ENCODE measurements at regions of chr17 and their contacts with region 1.

Region 1: DNA sequence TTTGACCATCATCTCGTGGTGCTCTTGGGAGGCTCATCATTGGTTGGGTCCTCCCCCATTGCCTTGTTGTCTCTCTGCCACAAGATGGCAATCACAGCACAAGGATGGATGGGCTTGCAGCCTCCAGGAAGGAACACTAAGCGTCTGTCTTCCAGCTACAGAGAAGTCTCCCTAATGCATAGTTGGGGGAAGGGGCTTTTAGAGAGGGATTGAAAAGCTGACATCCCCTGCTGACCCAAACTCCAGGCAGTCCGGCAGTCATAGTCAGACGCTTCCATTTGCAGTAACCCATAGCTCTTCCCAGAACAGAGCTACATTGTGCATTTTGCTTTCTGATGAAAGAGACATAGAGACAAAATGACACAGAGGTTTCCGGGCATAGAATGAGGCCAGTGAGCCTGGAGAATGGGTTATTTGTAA is 111.4 kb downstream of the UTP18 start:
- DNase-seq: peak; percentile 51
- ATAC-seq: peak; percentile 49
- H3K4me3 Mint-ChIP-seq: no peak overlapping the region
- H3K27ac Mint-ChIP-seq: no peak overlapping the region
- H3K4me1 Mint-ChIP-seq: peaks cover 11% of the 10 kb centered on the region
- H3K27me3 Mint-ChIP-seq: peaks cover 9% of the 10 kb centered on the region

Region 2: DNA sequence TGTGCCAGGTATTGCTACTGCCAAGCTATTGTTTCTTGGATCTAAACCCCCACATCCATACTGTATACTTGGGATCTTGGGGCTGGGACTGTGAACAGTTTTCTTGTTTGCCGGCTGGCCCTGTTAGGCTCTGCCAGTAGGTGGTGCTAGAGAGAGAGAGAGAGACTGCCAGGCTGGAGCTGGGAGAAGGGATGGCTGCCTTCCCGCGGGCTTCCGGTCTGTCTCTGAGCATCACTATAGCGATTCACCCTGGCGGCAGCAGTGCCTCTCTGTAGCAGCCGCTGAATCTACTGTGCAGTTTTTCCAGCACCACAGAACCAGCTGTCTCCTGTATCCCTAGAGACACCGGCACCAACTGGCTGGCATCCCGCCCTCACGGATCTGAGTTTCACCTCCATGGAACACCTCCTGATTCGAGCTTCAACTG is 89.8 kb after region 1 on chr17:
- CTCF ChIA-PET with region 1: interaction called, 28 read pairs
- POLR2A ChIA-PET with region 1: no interaction called
- DNase-seq: peak; percentile 69
- ATAC-seq: peak; percentile 79
- H3K4me3 Mint-ChIP-seq: no peak overlapping the region
- H3K27ac Mint-ChIP-seq: no peak overlapping the region
- H3K4me1 Mint-ChIP-seq: no peaks in the 10 kb centered on the region
- H3K27me3 Mint-ChIP-seq: peaks cover 3% of the 10 kb centered on the region

Region 3: DNA sequence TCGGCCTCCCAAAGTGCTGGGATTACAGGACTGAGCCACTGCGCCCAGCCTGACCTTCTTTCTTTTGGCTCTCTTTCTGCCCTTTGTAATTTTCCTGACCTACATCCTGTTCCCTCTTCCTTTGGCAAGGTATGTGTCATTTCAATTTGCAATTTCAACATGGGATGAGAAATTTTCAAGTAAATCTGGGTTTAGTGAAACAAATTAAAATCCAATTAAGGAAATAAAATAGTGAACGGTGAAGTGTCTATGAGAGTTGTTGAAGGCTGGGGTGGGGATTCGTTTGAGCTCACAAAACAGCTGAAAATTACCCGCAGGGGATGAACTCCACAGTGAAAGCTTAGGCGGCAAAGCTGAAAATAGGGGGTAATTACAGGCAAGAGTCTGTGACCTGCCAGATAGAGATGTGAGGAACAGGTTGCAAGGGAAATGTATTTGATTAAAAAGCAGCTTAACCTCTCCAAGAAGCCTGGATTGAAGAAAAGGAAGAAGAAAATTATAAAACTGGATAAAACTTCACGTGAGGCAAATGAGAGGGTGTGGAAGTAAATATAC is 166.3 kb after region 1 on chr17:
- CTCF ChIA-PET with region 1: interaction called, 109 read pairs
- POLR2A ChIA-PET with region 1: no interaction called
- DNase-seq: no peak
- ATAC-seq: no peak
- H3K4me3 Mint-ChIP-seq: no peak overlapping the region
- H3K27ac Mint-ChIP-seq: no peak overlapping the region
- H3K4me1 Mint-ChIP-seq: peaks cover 9% of the 10 kb centered on the region
- H3K27me3 Mint-ChIP-seq: peaks cover 2% of the 10 kb centered on the region

Region 4: DNA sequence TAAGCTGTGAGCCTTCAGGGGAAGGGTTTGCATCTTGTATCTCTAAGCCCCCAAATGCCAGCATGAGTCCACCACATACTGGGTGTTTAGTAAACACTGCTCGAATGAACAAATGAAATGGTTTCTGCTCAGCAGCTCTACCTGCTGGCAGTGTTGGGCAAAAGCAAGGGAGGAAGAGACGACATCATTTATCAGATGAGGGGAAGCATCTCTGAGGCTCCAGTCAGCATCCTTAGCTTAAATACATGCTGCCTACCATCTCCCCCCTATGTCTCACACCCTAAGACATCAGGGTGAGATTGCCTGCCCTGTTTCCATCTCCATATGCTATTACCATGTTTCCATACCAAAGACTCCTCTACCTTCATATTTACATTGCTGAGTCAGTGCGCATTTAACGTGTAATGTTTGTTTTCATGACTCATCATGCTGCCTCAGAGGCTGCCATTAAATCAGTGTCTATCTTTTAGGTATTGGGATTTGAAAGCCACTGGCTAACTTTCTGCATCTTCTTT is 268.4 kb after region 1 on chr17:
- CTCF ChIA-PET with region 1: interaction called, 21 read pairs
- POLR2A ChIA-PET with region 1: no interaction called
- DNase-seq: peak; percentile 23
- ATAC-seq: no peak
- H3K4me3 Mint-ChIP-seq: no peak overlapping the region
- H3K27ac Mint-ChIP-seq: no peak overlapping the region
- H3K4me1 Mint-ChIP-seq: no peaks in the 10 kb centered on the region
- H3K27me3 Mint-ChIP-seq: peaks cover 10% of the 10 kb centered on the region

Measured in activated CD8-positive, alpha-beta T cell treated with anti-CD3 and anti-CD28 coated beads, Interleukin-2, amount 10 ng/mL, durations not matched to agents 7 days and 5 days (primary cell).